ENCODE measurements at regions of chr14 and their contacts with region 1.

Region 1: DNA sequence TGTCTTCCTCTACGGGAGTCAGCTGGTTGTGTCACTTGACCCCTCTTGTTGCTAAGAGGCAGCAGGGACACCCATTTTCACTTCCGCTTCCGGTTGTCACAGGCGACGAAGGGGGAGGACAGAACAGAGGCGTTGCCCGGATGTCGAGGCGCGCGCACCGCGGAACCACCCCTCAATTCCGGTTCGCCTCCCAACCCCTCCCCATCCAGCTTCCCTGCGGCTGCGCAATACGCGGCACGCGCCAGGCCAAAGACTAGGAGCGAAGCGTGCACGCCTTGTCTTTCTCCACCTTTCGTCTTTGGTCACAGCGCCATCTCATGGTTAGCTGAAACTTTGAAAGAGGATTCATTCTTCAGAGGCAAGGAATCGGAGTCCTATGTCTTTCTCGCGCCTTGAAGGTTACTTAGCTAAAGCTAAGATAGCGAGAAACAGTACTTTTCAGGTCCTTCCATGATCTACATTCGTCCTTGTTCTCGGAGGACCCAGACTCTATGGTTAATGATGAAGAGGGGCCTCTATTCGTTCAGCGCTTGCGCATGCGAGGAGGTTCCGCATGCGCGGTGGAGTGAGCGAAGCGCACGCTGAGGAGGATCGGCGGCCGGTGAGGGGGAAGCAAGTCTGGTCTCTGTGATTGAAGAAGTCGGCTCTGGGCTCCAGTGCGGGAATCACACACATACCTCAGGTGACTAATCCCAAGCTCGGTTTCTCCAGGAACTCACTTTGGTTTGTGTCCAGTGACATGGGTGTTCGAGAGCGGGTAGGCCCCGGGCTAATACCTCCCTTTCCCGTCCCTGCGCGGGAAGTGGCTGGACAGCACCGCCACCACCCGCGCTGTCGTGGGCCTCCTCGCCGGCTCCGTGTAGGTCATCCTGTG is at the starts of genes ATP6V1D and EIF2S1:
- DNase-seq: peak; percentile 99
- H3K4me3 ChIP-seq: peak within 1 kb of the TSS; percentile 82 to 90 (median 88)
- H3K27ac ChIP-seq: peak within 1 kb of the TSS; percentile 97
- H3K4me1 ChIP-seq: peaks cover 27% of the 10 kb centered on the region
- H3K27me3 ChIP-seq: no peaks in the 10 kb centered on the region
- CTCF ChIP-seq: peak; percentile 97 to 99
- total RNA-seq, gene ATP6V1D: 87.1 to 124 TPM
- total RNA-seq, gene EIF2S1: 120 to 198 TPM

Region 2: GRCh38 chr14:66507722-66508546 is 852.1 kb before region 1 on chr14 and contains the start of gene GPHN:
- CTCF ChIA-PET with region 1: interaction called, 5 read pairs
- dilution Hi-C with region 1: no loop called
- in situ Hi-C with region 1: no loop called
- intact Hi-C with region 1: loop called (anchors 10 kb)
- DNase-seq: peak; percentile 99
- H3K4me3 ChIP-seq: peak within 1 kb of the TSS; percentile 90 to 99 (median 95)
- H3K27ac ChIP-seq: peak within 1 kb of the TSS; percentile 68
- H3K4me1 ChIP-seq: peaks cover 10% of the 10 kb centered on the region
- H3K27me3 ChIP-seq: no peaks in the 10 kb centered on the region
- CTCF ChIP-seq: peak in 1 of 2 donors; percentile 44
- total RNA-seq, gene GPHN: 10.8 to 30.2 TPM

Region 3: DNA sequence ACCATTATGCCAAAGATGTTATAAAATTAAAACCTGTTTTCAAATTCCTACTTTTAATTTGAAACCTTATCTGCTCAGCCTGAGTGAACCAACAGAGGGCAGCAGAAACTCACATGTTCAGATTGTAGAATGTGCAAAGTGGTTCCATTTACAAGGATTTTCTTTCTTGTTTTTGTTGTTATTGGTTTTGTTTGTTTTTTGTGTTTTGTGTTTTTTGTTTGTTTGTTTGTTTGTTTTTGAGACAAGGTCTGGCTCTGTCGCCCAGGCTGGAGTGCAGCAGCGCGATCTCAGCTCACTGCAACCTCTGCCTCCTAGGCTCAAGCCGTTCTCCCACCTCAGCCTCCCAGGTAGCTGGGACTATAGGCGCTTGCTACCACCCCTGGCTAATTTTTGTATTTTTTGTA is 193.6 kb before region 1 on chr14:
- CTCF ChIA-PET with region 1: no interaction called
- dilution Hi-C with region 1: no loop called
- in situ Hi-C with region 1: no loop called
- intact Hi-C with region 1: loop called (anchors 1 kb)
- DNase-seq: peak; percentile 21
- H3K4me3 ChIP-seq: no peak overlapping the region
- H3K27ac ChIP-seq: no peak overlapping the region
- H3K4me1 ChIP-seq: peaks cover 8% of the 10 kb centered on the region
- H3K27me3 ChIP-seq: no peaks in the 10 kb centered on the region
- CTCF ChIP-seq: peak; percentile 83 to 92

Region 4: GRCh38 chr14:67331368-67332125 is 28.5 kb before region 1 on chr14:
- CTCF ChIA-PET with region 1: no interaction called
- dilution Hi-C with region 1: no loop called
- in situ Hi-C with region 1: no loop called
- intact Hi-C with region 1: no loop called
- DNase-seq: peak; percentile 71
- H3K4me3 ChIP-seq: no peak overlapping the region
- H3K27ac ChIP-seq: peak overlapping the region; percentile 54
- H3K4me1 ChIP-seq: peaks cover 20% of the 10 kb centered on the region
- H3K27me3 ChIP-seq: no peaks in the 10 kb centered on the region
- CTCF ChIP-seq: no peak

Region 5: DNA sequence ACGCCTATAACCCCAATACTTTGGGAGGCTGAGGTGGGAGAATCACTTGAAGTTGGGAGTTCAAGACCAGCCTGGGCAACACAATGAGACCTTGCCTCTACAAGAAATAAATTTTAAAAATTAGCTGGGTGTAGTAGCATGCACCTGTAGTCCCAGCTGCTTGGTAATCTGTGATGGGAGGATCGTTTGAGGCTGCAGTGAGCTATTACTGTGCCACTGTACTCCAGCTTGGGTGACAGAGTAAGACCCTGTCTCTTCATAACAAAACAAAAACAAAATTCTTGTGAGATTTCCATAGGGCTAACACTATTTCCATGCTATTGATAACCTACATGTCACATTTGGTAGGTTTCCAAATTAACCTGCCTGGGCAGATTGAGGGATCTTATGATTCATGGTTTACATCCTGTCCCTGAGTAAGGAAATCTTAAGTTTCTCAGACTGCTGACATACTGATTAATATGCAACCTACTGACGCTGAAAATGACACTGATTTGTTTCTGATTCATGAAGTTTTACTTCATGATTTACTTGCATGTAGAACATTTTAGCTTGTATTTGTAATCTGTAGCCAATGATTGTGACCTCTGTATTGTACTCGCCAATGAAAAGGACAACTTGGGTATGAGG is 16.3 kb before region 1 on chr14:
- CTCF ChIA-PET with region 1: no interaction called
- dilution Hi-C with region 1: no loop called
- in situ Hi-C with region 1: no loop called
- intact Hi-C with region 1: loop called (anchors 1 kb)
- DNase-seq: peak; percentile 84
- H3K4me3 ChIP-seq: no peak overlapping the region
- H3K27ac ChIP-seq: peak overlapping the region; percentile 72
- H3K4me1 ChIP-seq: peaks cover 20% of the 10 kb centered on the region
- H3K27me3 ChIP-seq: no peaks in the 10 kb centered on the region
- CTCF ChIP-seq: no peak

Region 6: DNA sequence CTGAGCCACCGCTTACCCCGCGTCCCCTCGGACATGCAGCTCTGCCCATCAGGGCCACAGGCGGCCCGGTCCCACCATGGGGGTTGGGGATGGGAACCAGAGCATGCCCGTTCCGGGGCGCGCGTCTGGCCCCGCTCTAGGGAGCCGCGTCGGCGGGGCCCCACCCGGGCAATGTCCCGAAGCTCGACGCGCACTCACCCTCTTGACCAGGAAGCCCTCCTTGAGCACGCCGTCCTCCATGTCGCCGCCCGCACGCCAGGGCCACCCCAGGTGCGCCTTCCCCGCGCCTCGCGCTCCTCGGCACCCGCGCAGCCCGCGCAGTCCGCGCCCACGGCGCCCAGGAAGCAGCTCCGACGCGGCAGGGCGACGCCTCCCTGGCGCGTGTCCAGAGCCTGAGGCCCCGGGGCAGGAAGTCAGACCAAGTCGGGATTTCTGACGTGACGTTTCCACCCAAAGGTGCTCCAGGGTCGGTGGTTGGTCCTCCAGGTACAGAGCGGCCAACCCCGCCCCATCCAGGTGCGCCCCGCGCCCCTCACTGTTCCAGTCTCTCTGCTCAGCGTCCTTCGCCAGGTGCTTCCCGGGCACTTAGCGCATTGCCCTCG is 51.9 kb after region 1 on chr14 and contains the start of gene PLEK2:
- CTCF ChIA-PET with region 1: interaction called, 3 read pairs
- dilution Hi-C with region 1: no loop called
- in situ Hi-C with region 1: no loop called
- intact Hi-C with region 1: loop called (anchors 5 kb)
- DNase-seq: peak; percentile 92
- H3K4me3 ChIP-seq: peak within 1 kb of the TSS; percentile 58 to 92 (median 76)
- H3K27ac ChIP-seq: peak within 1 kb of the TSS; percentile 89
- H3K4me1 ChIP-seq: peaks cover 43% of the 10 kb centered on the region
- H3K27me3 ChIP-seq: no peaks in the 10 kb centered on the region
- CTCF ChIP-seq: no peak
- total RNA-seq, gene PLEK2: 9.8 to 152 TPM